ENCODE measurements at regions of chr5 and their contacts with region 1.

Region 1: DNA sequence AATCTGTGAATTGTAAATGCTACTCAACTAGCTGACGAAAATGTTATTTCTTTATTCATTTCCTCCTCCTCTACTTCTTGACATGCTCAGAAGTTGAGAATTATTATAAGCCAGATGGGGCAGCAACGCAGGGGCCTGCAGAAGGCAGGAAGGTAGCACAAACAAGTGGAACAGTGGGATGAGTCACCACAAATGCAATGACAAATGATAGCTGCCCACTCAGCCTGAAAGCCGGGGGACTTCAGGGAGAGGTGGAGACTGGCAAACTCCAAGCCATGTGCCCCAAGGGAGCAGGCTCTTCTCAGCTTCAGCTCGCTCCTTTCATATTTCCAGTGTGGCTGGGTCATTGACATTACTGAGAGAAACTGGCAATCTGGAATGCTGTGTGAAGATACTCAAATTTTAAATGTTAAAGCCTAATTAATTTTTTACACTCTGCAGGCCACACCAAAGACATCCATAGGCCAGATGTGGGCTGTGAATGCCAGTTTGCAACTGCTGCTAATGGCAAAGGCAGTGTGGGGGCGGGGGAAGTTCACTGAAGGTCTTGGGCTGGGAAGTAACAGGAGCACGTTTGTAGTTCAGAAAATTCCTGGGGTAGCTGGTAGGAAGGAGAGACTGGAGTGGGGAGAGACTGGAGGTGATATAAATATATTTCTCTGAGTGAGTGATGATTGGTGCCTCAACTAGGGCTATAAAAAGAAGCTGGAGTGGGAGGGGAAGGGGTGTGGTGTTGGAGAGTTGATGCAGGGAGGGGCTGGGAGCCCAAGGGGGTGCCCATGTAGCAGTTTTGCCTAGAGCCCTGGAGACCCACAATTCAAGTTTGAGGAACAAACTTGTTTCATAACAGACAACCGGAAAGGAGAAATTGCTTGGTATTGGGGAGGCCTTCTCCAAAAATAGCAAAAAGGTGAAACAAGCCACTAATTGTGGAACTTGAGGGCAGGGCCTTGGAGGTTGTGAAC is 20.8 kb upstream of the ADRB2 start:
- DNase-seq: peak; percentile 30
- CTCF ChIP-seq: no peak

Region 2: GRCh38 chr5:148820461-148821395 is 15.1 kb after region 1 on chr5:
- CTCF ChIA-PET with region 1: interaction called, 10 read pairs
- POLR2A ChIA-PET with region 1: no interaction called
- DNase-seq: no peak
- CTCF ChIP-seq: peak; percentile 52